PC-3 (cell line): ENCODE measurements at regions of chr13 and their contacts with region 1.

Region 1: GRCh38 chr13:34076943-34077703 is 259.2 kb downstream of the RFC3 start:
- DNase-seq: peak; percentile 48
- ATAC-seq: peak; percentile 77
- H3K4me3 ChIP-seq: no peak overlapping the region
- H3K27ac ChIP-seq: peak overlapping the region; percentile 77
- H3K4me1 ChIP-seq: peaks cover 18% of the 10 kb centered on the region
- H3K27me3 ChIP-seq: no peaks in the 10 kb centered on the region
- CTCF ChIP-seq: peak; percentile 81

Region 2: GRCh38 chr13:33799950-33800592 is 277.1 kb before region 1 on chr13:
- CTCF ChIA-PET with region 1: no interaction called
- POLR2A ChIA-PET with region 1: no interaction called
- intact Hi-C with region 1: loop called (anchors 2 kb)
- DNase-seq: peak; percentile 46
- ATAC-seq: peak; percentile 51
- H3K4me3 ChIP-seq: peak overlapping the region; percentile 29; the same call in 1 of the 2 replicates
- H3K27ac ChIP-seq: no peak overlapping the region
- H3K4me1 ChIP-seq: peaks cover 19% of the 10 kb centered on the region
- H3K27me3 ChIP-seq: no peaks in the 10 kb centered on the region
- CTCF ChIP-seq: peak; percentile 64

Region 3: GRCh38 chr13:33931397-33932311 is 145.5 kb before region 1 on chr13:
- CTCF ChIA-PET with region 1: interaction called, 6 read pairs
- POLR2A ChIA-PET with region 1: no interaction called
- intact Hi-C with region 1: loop called (anchors 1 kb)
- DNase-seq: peak; percentile 75
- ATAC-seq: peak; percentile 95
- H3K4me3 ChIP-seq: no peak overlapping the region
- H3K27ac ChIP-seq: no peak overlapping the region
- H3K4me1 ChIP-seq: no peaks in the 10 kb centered on the region
- H3K27me3 ChIP-seq: no peaks in the 10 kb centered on the region
- CTCF ChIP-seq: peak; percentile 85

Region 4: DNA sequence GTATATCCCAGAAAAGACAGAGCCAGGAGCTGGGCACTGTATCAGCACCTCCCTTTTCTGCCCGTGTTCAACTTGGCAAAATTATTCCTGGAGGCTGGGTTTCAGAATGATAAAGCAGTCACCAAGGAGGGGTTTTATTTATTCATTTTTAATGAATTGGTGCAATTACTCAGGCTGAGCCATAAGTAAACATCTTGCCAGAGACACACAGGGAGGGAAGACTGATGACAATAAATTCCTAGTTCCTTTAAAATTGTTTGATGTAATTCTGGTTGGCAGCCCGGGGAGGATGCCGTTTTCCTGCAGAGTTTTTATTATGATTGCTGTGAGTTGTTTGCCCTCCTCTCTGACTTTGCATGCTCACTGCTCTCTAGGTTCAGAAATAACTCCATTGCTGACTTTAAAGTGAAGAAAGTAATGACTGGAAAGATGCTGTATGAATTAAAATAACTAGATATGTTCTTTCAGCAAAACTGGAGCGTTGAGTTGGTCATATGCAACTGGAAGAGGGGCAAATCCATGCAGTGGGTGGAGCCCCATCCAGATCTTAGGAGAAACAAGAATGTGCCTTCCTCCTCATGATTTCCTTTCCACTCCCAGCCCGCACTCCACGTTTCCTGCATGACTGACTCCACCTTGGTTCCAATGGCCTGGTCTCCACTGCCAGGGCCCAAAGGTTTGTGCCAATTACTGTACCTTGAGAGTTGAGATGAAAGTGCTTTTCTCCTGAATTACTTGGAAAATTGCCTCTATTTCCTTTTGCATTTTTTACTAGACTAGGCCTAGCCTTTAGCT is 77.1 kb before region 1 on chr13:
- CTCF ChIA-PET with region 1: no interaction called
- POLR2A ChIA-PET with region 1: no interaction called
- intact Hi-C with region 1: loop called (anchors 2 kb)
- DNase-seq: peak; percentile 77
- ATAC-seq: peak; percentile 76
- H3K4me3 ChIP-seq: no peak overlapping the region
- H3K27ac ChIP-seq: peak overlapping the region; percentile 72
- H3K4me1 ChIP-seq: peaks cover 46% of the 10 kb centered on the region
- H3K27me3 ChIP-seq: no peaks in the 10 kb centered on the region
- CTCF ChIP-seq: no peak

Region 5: DNA sequence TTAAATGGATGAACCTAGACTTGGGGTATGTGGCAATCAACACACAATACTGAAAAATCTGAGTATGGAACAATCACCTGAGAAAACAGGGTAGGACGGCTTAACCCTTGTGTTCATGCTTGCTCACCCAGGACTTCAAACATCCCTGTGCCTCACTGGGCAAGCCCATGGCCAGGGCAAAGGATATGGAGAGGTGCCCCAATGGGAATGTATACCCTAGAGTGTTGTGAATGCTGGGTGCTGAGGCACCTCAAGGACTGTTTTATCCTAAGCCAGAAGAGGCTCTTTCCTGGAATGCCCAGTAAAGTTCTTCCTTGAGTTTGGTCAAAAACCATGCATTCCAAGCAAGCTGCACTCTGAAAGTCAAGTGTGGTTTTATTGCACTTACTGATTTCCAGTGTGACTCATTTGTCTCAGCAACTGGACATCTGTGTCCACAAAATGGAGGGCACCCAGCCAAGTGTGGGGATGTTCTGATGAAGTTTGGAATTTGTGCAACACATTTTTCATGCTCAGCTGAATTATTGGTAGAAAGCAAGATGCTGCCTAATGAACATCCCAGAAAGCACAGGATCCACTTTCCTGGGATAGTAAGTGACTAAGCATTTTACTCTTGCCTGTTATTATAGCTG is 272.1 kb after region 1 on chr13:
- CTCF ChIA-PET with region 1: no interaction called
- POLR2A ChIA-PET with region 1: no interaction called
- intact Hi-C with region 1: loop called (anchors 2 kb)
- DNase-seq: peak; percentile 92
- ATAC-seq: peak; percentile 73
- H3K4me3 ChIP-seq: no peak overlapping the region
- H3K27ac ChIP-seq: peak overlapping the region; percentile 96
- H3K4me1 ChIP-seq: peaks cover 51% of the 10 kb centered on the region
- H3K27me3 ChIP-seq: no peaks in the 10 kb centered on the region
- CTCF ChIP-seq: no peak